ENCODE measurements at regions of chr3 and their contacts with region 1.

Region 1: DNA sequence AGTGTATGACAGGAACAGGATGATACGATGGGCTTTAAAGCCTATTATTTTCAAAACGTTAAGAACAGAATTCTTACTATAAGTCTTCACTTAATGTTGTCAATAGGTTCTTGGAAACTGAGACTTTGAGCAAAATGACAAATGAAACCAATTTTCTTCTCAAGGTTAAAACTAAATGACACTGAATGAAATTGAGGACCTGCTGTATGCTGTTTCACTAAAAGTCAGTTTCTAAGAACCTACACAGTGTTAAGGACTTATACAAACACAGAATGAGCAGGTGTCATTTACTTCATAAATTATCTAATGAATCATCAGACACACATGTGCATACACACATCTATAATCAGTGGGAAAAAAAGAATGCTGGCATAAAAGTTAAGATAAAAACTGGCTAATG is 106.9 kb downstream of the RFTN1 start:
- DNase-seq: no peak
- ATAC-seq: peak; percentile 65
- H3K4me3 Mint-ChIP-seq: no peak overlapping the region
- H3K27ac Mint-ChIP-seq: peak overlapping the region; percentile 52
- H3K4me1 Mint-ChIP-seq: peaks cover 30% of the 10 kb centered on the region
- H3K27me3 Mint-ChIP-seq: no peaks in the 10 kb centered on the region

Region 2: GRCh38 chr3:15520185-15520584 is 886.4 kb before region 1 on chr3:
- CTCF ChIA-PET with region 1: no interaction called
- POLR2A ChIA-PET with region 1: no interaction called
- intact Hi-C with region 1: no loop called
- DNase-seq: peak; percentile 13
- ATAC-seq: peak; percentile 30
- H3K4me3 Mint-ChIP-seq: no peak overlapping the region
- H3K27ac Mint-ChIP-seq: no peak overlapping the region
- H3K4me1 Mint-ChIP-seq: peaks cover 12% of the 10 kb centered on the region
- H3K27me3 Mint-ChIP-seq: peaks cover 6% of the 10 kb centered on the region

Region 3: GRCh38 chr3:16349986-16350596 is 56.5 kb before region 1 on chr3:
- CTCF ChIA-PET with region 1: no interaction called
- POLR2A ChIA-PET with region 1: no interaction called
- intact Hi-C with region 1: no loop called
- DNase-seq: no peak
- ATAC-seq: no peak
- H3K4me3 Mint-ChIP-seq: no peak overlapping the region
- H3K27ac Mint-ChIP-seq: peak overlapping the region; percentile 45
- H3K4me1 Mint-ChIP-seq: peaks cover 35% of the 10 kb centered on the region
- H3K27me3 Mint-ChIP-seq: no peaks in the 10 kb centered on the region

Region 4: GRCh38 chr3:16423947-16424673 is 17.5 kb after region 1 on chr3:
- CTCF ChIA-PET with region 1: interaction called, 5 read pairs
- POLR2A ChIA-PET with region 1: interaction called, 11 read pairs
- intact Hi-C with region 1: no loop called
- DNase-seq: no peak
- ATAC-seq: no peak
- H3K4me3 Mint-ChIP-seq: no peak overlapping the region
- H3K27ac Mint-ChIP-seq: no peak overlapping the region
- H3K4me1 Mint-ChIP-seq: peaks cover 6% of the 10 kb centered on the region
- H3K27me3 Mint-ChIP-seq: no peaks in the 10 kb centered on the region

Region 5: GRCh38 chr3:16884084-16884747 is 477.6 kb after region 1 on chr3:
- CTCF ChIA-PET with region 1: no interaction called
- POLR2A ChIA-PET with region 1: no interaction called
- intact Hi-C with region 1: no loop called
- DNase-seq: peak; percentile 87
- ATAC-seq: peak; percentile 61
- H3K4me3 Mint-ChIP-seq: peak overlapping the region; percentile 93
- H3K27ac Mint-ChIP-seq: peak overlapping the region; percentile 94
- H3K4me1 Mint-ChIP-seq: peaks cover 20% of the 10 kb centered on the region
- H3K27me3 Mint-ChIP-seq: no peaks in the 10 kb centered on the region

Region 6: DNA sequence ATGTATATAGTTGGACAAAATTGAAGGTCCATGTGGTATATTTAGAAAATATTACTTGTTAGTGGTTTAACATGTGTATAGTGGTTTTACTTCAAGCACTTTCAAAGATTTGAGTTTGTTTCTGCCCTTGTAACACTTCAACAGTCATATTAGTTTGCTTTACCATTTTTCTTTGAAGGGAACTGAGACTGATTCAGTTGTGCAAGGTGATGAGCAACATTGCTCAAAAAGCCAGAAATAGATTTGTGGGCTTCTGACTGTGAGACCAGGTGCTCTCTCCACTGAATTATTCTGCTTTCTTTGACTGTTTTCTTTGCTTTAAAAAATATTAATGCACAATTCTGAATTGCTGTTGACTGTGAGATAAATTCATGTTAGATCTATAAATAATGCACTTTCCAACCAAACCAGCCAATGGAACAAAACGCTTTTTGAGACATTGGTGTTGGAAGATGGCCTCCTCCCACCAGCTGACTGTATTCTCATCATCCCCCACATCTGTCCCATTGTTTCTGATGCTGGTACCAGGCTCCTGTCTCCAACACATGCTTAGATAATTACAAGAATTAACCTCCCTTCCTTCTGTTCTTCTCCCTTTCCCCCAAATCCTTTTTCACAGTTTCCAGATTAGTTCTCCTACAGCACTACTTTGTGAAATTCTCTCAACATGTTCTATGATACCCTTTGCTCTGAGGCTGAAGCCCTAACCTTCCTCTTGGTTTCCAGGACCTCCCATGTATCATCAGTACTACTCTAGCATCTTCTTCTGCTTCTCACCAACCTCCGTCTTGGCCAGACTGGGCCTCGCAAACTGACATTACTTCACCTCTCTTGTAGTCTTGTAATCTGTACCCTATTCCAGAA is 506.1 kb after region 1 on chr3:
- CTCF ChIA-PET with region 1: no interaction called
- POLR2A ChIA-PET with region 1: no interaction called
- intact Hi-C with region 1: no loop called
- DNase-seq: no peak
- ATAC-seq: peak; percentile 66
- H3K4me3 Mint-ChIP-seq: no peak overlapping the region
- H3K27ac Mint-ChIP-seq: peak overlapping the region; percentile 55
- H3K4me1 Mint-ChIP-seq: peaks cover 73% of the 10 kb centered on the region
- H3K27me3 Mint-ChIP-seq: no peaks in the 10 kb centered on the region